ENCODE measurements at regions of chr12 and their contacts with region 1.

Region 1: GRCh38 chr12:103930034-103930786 is at the start of gene HSP90B1:
- H3K4me3 Mint-ChIP-seq: peak within 1 kb of the TSS; percentile 78
- H3K27ac Mint-ChIP-seq: peak within 1 kb of the TSS; percentile 99
- H3K4me1 Mint-ChIP-seq: peaks cover 43% of the 10 kb centered on the region
- H3K27me3 Mint-ChIP-seq: no peaks in the 10 kb centered on the region

Region 2: DNA sequence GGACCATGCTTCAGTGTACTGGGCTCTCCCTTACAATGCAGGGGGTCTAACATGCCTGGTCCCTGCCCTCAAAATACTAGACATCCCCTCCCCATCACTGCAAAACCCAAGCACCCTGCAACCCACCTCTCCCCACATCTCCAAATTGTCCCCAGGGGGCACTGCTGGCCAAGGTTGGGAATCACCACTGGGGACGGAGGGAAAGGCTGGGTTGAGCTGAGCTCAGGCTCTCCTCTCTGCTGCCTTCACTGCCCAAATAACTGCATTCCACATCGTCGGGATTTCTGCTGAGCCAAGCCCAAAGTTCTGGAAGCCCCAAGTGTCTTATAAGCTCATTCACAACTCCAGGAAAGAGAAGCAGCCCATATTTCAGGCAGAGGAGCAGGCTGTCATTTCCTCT is 158.7 kb before region 1 on chr12:
- intact Hi-C with region 1: loop called (anchors 2 kb)
- H3K4me3 Mint-ChIP-seq: no peak overlapping the region
- H3K27ac Mint-ChIP-seq: no peak overlapping the region
- H3K4me1 Mint-ChIP-seq: peaks cover 10% of the 10 kb centered on the region
- H3K27me3 Mint-ChIP-seq: no peaks in the 10 kb centered on the region

Region 3: DNA sequence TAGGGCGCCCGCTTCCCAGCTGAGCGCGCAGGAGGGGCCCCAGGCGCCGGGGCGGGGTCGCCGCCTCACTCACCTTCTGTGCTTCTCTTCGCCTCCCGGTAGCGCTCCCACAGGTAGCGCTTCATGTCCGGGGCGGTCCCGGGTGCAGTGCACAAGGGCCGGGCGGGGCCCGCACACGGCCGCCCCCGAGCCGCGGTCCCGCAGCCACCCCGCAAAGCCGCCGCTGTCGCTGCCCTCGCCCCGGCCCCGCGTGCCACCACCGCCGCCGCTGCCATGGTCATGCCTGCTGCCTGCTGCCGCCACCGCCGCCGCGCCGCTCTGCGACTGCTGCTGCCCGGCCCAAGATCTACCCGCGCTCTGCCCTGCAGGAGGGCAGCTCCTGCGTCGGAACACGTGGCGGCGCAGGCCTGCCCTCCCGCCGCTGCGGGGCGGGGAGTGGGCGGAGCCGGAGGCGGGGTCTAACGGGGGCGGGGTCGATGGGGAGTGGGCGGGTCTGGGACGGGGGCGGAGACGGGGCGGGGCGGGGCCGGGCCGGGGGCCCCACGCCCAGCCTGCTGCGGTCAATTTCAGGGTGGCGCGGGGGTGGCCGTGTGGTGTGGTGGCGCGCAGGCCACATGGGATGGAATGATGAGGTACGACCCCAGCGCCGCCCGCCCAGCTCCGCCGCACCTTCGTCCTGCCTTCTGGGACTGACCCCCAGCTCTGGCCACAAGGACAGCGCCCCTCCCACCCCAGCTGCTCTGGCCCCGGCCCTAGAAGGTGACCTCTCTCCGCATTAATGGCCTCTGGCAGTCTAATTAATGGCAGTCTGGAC is 89.1 kb before region 1 on chr12 and contains the start of gene NT5DC3:
- intact Hi-C with region 1: loop called (anchors 1 kb)
- H3K4me3 Mint-ChIP-seq: peak within 1 kb of the TSS; percentile 83
- H3K27ac Mint-ChIP-seq: peak within 1 kb of the TSS; percentile 81
- H3K4me1 Mint-ChIP-seq: peaks cover 38% of the 10 kb centered on the region
- H3K27me3 Mint-ChIP-seq: peaks cover 9% of the 10 kb centered on the region

Region 4: GRCh38 chr12:103884316-103884715 is 45.9 kb before region 1 on chr12:
- intact Hi-C with region 1: loop called (anchors 2 kb)
- H3K4me3 Mint-ChIP-seq: no peak overlapping the region
- H3K27ac Mint-ChIP-seq: no peak overlapping the region
- H3K4me1 Mint-ChIP-seq: peaks cover 5% of the 10 kb centered on the region
- H3K27me3 Mint-ChIP-seq: no peaks in the 10 kb centered on the region

Region 5: DNA sequence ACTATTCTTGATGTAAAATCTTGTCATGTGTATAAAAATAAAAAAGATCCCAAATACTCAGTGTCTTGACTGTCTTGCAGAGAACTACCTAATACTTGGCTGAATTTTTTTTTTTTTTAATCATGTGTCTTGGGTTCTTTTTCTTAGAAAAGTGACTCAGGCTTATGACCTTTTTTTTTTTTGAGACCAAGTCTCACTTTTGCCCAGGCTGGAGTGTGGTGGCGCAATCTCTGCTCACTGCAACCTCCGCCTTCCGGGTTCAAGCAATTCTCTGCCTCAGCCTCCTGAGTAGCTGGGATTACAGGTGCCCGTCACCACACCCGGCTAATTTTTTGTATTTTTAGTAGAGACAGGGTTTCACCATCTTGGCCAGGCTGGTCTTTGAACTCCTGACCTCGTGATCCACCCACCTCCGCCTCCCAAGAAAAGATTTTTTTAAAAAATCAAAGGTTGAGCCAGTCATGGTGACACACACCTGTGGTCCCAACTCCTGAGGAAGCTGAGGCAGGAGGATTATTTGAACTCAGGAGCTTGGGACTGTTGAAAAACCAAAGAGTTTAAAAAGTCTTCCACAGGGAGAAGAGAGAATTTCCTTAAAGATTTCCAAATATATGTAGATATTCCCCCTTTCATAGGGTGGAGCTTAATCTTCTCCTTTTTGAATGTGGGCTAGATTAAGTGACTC is 17.8 kb after region 1 on chr12:
- intact Hi-C with region 1: loop called (anchors 2 kb)
- H3K4me3 Mint-ChIP-seq: no peak overlapping the region
- H3K27ac Mint-ChIP-seq: peak overlapping the region; percentile 37
- H3K4me1 Mint-ChIP-seq: peaks cover 12% of the 10 kb centered on the region
- H3K27me3 Mint-ChIP-seq: no peaks in the 10 kb centered on the region

Region 6: DNA sequence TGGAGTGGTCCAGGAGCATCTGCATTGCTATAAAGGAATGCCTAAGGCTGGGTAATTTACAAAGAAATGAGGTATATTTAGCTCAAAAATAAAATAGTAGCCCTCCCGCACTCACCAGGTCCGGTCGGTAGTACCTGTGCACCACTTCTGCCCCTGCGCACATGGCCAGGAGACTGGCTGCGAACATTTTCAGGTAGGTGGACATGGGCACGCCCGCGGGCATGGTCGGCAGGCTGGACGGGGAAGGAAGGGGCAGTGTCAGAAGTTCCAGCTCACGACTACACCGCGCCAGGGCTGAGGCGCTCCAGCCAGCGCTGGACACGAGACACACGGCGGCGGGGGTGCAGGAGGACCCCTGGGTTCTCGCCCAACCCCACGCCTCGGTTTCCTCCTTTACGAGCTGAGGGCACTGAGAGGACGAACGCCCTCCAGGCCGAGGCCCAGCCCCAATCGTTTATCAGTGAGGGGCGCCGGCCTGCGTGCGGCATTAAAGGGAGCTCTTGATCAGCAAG is 26.4 kb after region 1 on chr12:
- intact Hi-C with region 1: loop called (anchors 1 kb)
- H3K4me3 Mint-ChIP-seq: peak overlapping the region; percentile 85
- H3K27ac Mint-ChIP-seq: peak overlapping the region; percentile 89
- H3K4me1 Mint-ChIP-seq: peaks cover 42% of the 10 kb centered on the region
- H3K27me3 Mint-ChIP-seq: no peaks in the 10 kb centered on the region

Region 7: GRCh38 chr12:103965590-103966504 is 35.6 kb after region 1 on chr12 and contains the start of gene TDG:
- intact Hi-C with region 1: loop called (anchors 2 kb)
- H3K4me3 Mint-ChIP-seq: peak within 1 kb of the TSS; percentile 99
- H3K27ac Mint-ChIP-seq: peak within 1 kb of the TSS; percentile 99
- H3K4me1 Mint-ChIP-seq: peaks cover 44% of the 10 kb centered on the region
- H3K27me3 Mint-ChIP-seq: no peaks in the 10 kb centered on the region